Endothelial cell of umbilical vein (primary cell): ENCODE measurements at regions of chr19 and their contacts with region 1.

Region 1: GRCh38 chr19:43446746-43447489 is 18.5 kb downstream of the LYPD3 start:
- DNase-seq: peak; percentile 65
- H3K4me3 ChIP-seq: no peak overlapping the region
- H3K27ac ChIP-seq: no peak overlapping the region
- H3K4me1 ChIP-seq: no peaks in the 10 kb centered on the region
- H3K27me3 ChIP-seq: no peaks in the 10 kb centered on the region
- CTCF ChIP-seq: peak; percentile 79 to 88
- POLR2A ChIP-seq: no peak

Region 2: DNA sequence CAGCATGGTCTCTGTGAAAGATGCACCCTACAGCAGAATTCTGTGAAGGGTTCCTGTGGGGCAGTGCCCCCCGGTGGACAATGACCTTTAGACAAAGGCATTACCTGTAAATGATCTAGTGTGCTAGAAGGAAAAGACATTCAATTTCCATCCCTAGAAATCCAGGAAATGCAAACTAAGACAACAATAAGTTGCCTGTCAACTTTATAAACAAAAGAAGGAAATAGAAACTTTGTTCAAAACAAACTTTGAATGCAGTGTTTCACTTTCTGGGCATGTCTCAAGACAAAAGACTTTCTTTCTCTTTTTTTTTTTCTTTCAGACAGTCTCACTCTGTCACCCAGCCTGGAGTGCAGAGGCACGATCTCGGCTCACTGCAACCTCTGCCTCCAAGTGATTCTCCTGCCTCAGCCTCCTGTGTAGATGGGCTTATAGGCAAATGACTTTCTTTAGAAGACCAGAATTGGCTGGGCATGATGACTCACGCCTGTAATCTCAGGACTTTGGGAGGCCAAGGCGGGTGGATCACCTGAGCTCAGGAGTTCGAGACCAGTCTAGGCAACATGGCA is 16.7 kb before region 1 on chr19:
- CTCF ChIA-PET with region 1: interaction called, 36 read pairs
- POLR2A ChIA-PET with region 1: no interaction called
- dilution Hi-C with region 1: no loop called
- intact Hi-C with region 1: no loop called
- DNase-seq: no peak
- H3K4me3 ChIP-seq: no peak overlapping the region
- H3K27ac ChIP-seq: no peak overlapping the region
- H3K4me1 ChIP-seq: peaks cover 2% of the 10 kb centered on the region
- H3K27me3 ChIP-seq: no peaks in the 10 kb centered on the region
- CTCF ChIP-seq: no peak
- POLR2A ChIP-seq: no peak

Region 3: DNA sequence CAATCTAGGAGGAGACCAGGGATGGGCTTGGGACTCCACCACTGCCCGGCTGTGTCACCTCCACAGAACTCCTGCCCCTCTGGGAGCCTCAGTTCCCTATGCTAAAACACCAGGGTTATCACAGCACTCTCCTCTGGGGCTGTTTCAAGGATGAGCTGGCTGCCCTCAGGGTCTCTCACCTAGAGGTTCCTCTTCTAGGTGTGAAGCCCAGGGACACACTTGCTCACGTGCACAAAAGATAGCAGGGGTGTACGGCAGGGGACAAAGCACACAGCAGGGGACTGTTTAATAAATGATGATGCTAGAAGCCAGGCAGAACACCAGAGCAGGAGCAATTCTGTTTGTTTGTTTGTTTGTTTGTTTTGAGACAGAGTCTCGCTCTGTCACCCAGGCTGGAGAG is 35.3 kb after region 1 on chr19:
- CTCF ChIA-PET with region 1: interaction called, 13 read pairs
- POLR2A ChIA-PET with region 1: no interaction called
- dilution Hi-C with region 1: no loop called
- intact Hi-C with region 1: no loop called
- DNase-seq: no peak
- H3K4me3 ChIP-seq: no peak overlapping the region
- H3K27ac ChIP-seq: no peak overlapping the region
- H3K4me1 ChIP-seq: no peaks in the 10 kb centered on the region
- H3K27me3 ChIP-seq: no peaks in the 10 kb centered on the region
- CTCF ChIP-seq: no peak
- POLR2A ChIP-seq: no peak

Region 4: GRCh38 chr19:43503501-43504425 is 56.8 kb after region 1 on chr19:
- CTCF ChIA-PET with region 1: interaction called, 47 read pairs
- POLR2A ChIA-PET with region 1: no interaction called
- dilution Hi-C with region 1: no loop called
- intact Hi-C with region 1: loop called (anchors 1 kb)
- DNase-seq: peak; percentile 95
- H3K4me3 ChIP-seq: peak overlapping the region; percentile 42 to 66 (median 49)
- H3K27ac ChIP-seq: peak overlapping the region; percentile 31
- H3K4me1 ChIP-seq: peaks cover 11% of the 10 kb centered on the region
- H3K27me3 ChIP-seq: no peaks in the 10 kb centered on the region
- CTCF ChIP-seq: peak in 1 of 2 donors; percentile 16
- POLR2A ChIP-seq: no peak

Region 5: DNA sequence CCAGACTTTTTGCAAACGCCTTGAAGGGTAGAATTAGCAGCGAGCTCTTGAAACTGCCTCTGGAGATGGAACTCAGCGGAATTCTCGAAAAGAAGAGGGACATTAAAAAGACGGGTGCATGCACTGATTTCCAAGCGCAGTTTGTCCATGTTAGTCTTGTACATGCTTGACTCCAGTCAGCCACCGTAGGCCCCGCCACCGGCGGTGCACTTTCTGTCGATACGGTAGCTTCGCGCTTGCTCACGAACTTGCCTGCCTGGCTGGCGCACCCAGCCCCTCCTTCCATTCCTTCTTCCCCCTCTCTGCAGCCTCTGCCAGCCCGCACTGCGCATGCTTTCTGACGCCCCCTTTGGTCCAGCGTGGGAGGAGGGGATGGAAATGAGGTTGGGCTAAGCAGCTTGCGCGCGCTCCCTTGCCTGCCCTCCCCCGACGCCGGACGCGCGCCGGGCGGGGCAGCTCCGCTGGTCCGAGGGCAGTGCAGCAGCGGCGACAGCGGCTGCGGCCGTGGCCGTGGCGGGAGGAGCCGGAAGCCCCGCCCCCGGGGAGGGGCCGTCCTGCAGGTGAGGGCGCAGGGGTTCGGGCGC is 86.1 kb after region 1 on chr19 and contains the start of gene ZNF575:
- CTCF ChIA-PET with region 1: interaction called, 20 read pairs
- POLR2A ChIA-PET with region 1: no interaction called
- dilution Hi-C with region 1: no loop called
- intact Hi-C with region 1: no loop called
- DNase-seq: peak; percentile 96
- H3K4me3 ChIP-seq: peak within 1 kb of the TSS; percentile 22 to 61 (median 31)
- H3K27ac ChIP-seq: peak within 1 kb of the TSS; percentile 32
- H3K4me1 ChIP-seq: peaks cover 10% of the 10 kb centered on the region
- H3K27me3 ChIP-seq: no peaks in the 10 kb centered on the region
- CTCF ChIP-seq: no peak
- POLR2A ChIP-seq: no peak
- total RNA-seq, gene ZNF575: 1.4 and 3.0 TPM in 2 replicates

Region 6: GRCh38 chr19:43651758-43652545 is 205.0 kb after region 1 on chr19:
- CTCF ChIA-PET with region 1: interaction called, 10 read pairs
- POLR2A ChIA-PET with region 1: no interaction called
- dilution Hi-C with region 1: no loop called
- intact Hi-C with region 1: loop called (anchors 1 kb)
- DNase-seq: peak; percentile 77
- H3K4me3 ChIP-seq: peak overlapping the region in 1 of 3 experiments; percentile 7
- H3K27ac ChIP-seq: no peak overlapping the region
- H3K4me1 ChIP-seq: no peaks in the 10 kb centered on the region
- H3K27me3 ChIP-seq: no peaks in the 10 kb centered on the region
- CTCF ChIP-seq: peak; percentile 82 to 86
- POLR2A ChIP-seq: no peak